ENCODE measurements at regions of chr18 and their contacts with region 1.

Region 1: DNA sequence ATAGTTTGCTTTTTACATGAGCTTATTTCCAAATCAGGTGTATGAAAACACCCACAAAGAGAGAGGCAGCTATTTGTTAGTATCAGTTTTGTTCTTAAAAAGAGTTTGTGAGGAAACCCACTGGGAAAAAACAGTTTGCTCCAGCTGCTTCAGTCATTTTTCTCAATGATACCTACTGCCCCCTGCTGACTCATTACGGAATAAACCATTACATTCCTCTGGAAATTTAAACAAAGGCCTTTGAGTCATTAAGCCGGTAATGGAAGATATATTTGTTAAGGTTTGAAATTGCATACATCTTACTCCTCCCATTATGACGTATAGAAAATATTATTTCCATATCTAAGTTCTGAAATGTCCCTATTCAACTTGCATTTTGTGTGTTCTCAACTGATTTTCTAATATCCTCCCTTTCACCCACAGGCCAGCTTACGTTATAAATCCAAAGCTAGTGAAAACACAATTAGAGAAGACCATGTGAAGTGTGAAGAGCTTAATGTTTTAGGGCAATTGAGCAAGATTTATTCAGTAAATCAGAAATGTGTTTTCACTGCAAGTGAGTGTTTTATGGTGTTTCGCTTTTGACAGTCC is 761.6 kb downstream of the DSC3 start:
- DNase-seq: peak; percentile 25
- H3K4me3 ChIP-seq: no peak overlapping the region
- H3K27ac ChIP-seq: no peak overlapping the region
- H3K4me1 ChIP-seq: no peaks in the 10 kb centered on the region
- H3K27me3 ChIP-seq: no peaks in the 10 kb centered on the region
- CTCF ChIP-seq: peak; percentile 54

Region 2: GRCh38 chr18:29874519-29875098 is 406.4 kb before region 1 on chr18:
- intact Hi-C with region 1: loop called (anchors 10 kb)
- DNase-seq: no peak
- H3K4me3 ChIP-seq: no peak overlapping the region
- H3K27ac ChIP-seq: no peak overlapping the region
- H3K4me1 ChIP-seq: no peaks in the 10 kb centered on the region
- H3K27me3 ChIP-seq: no peaks in the 10 kb centered on the region
- CTCF ChIP-seq: no peak